CD14-positive monocyte (primary cell): ENCODE measurements at regions of chr19 and their contacts with region 1.

Region 1: GRCh38 chr19:40465557-40466150 is at the start of gene BLVRB:
- DNase-seq: peak; percentile 98 to 99 (median 98)
- H3K4me3 ChIP-seq: peak within 1 kb of the TSS; percentile 58 to 84 (median 62)
- H3K4me3 Mint-ChIP-seq: peak within 1 kb of the TSS; percentile 90 to 96
- H3K27ac ChIP-seq: peak within 1 kb of the TSS; percentile 91 to 96
- H3K27ac Mint-ChIP-seq: peak within 1 kb of the TSS; percentile 93 to 99 (median 97)
- H3K4me1 ChIP-seq: peaks cover 57 to 70% of the 10 kb centered on the region in 2 donors
- H3K4me1 Mint-ChIP-seq: peaks cover 61% of the 10 kb centered on the region
- H3K27me3 ChIP-seq: peaks cover 13 to 24% of the 10 kb centered on the region in 2 donors
- H3K27me3 Mint-ChIP-seq: peaks cover 25 to 33% (median 30%) of the 10 kb centered on the region in 3 donors
- CTCF ChIP-seq: no peak
- polyA plus RNA-seq, gene BLVRB: 299 to 625 (median 601) TPM

Region 2: GRCh38 chr19:40365613-40366401 is 99.8 kb before region 1 on chr19:
- intact Hi-C with region 1: loop called in 1 of 2 experiments (anchors 10 kb)
- DNase-seq: peak; percentile 69 to 84 (median 74)
- H3K4me3 ChIP-seq: peak overlapping the region; percentile 34 to 69 (median 41)
- H3K4me3 Mint-ChIP-seq: peak overlapping the region; percentile 76 to 81
- H3K27ac ChIP-seq: peak overlapping the region; percentile 69 to 72
- H3K27ac Mint-ChIP-seq: peak overlapping the region; percentile 77 to 94 (median 87)
- H3K4me1 ChIP-seq: peaks cover 66 to 70% of the 10 kb centered on the region in 2 donors
- H3K4me1 Mint-ChIP-seq: peaks cover 61% of the 10 kb centered on the region
- H3K27me3 ChIP-seq: no peaks in the 10 kb centered on the region
- H3K27me3 Mint-ChIP-seq: peaks cover 0 to 2% (median 0%) of the 10 kb centered on the region in 3 donors
- CTCF ChIP-seq: no peak

Region 3: DNA sequence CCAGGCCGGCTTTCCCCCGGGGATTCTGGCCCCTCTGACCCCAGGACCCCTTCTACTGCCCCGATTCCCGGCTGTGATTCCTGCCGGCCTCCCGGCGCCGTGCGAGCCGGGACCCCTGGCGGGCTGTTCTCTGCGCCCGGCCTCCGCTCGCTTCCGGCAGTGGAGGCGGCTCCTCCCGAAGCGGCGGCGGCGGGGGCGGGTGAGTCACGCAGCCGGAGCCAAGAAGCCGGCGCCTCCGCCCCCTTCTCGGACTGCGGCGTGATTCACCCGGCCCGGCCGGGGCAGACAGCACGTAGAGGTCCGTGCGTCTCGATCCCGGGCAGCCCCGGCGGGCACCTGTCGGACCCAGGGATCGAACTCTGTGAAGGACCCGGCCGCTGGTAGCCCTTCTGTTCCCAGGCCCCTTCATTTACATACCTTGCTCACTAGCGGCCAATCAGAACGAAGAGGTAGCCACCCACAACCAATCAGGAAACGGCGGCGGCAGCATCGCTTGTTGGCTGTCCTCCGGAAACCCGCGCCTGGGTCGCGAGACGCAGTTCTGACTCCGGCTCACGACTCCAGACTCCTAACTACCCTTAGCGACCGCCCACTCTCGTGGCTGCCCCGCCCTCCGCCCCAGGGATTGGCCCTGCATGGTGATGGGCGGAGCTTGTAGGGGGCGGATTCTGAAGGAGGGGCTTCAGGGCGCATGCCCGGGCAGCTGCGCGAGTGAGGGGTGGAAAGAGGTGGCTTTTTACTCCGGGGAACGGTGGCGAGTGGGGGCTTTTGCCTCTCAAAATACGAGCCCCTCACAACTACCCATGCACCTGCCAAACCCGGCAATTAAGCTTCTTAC is 40.0 kb before region 1 on chr19 and contains the start of gene SERTAD1:
- intact Hi-C with region 1: loop called in 1 of 2 experiments (anchors 2 kb)
- DNase-seq: peak; percentile 99
- H3K4me3 ChIP-seq: peak within 1 kb of the TSS; percentile 93 to 97 (median 94)
- H3K4me3 Mint-ChIP-seq: peak within 1 kb of the TSS; percentile 99
- H3K27ac ChIP-seq: peak within 1 kb of the TSS; percentile 97 to 99
- H3K27ac Mint-ChIP-seq: peak within 1 kb of the TSS; percentile 94 to 100 (median 98)
- H3K4me1 ChIP-seq: peaks cover 19 to 28% of the 10 kb centered on the region in 2 donors
- H3K4me1 Mint-ChIP-seq: peaks cover 21% of the 10 kb centered on the region
- H3K27me3 ChIP-seq: no peaks in the 10 kb centered on the region
- H3K27me3 Mint-ChIP-seq: peaks cover 0 to 3% (median 0%) of the 10 kb centered on the region in 3 donors
- CTCF ChIP-seq: peak; percentile 77
- polyA plus RNA-seq, gene SERTAD1: 21.0 to 55.9 (median 21.6) TPM

Region 4: DNA sequence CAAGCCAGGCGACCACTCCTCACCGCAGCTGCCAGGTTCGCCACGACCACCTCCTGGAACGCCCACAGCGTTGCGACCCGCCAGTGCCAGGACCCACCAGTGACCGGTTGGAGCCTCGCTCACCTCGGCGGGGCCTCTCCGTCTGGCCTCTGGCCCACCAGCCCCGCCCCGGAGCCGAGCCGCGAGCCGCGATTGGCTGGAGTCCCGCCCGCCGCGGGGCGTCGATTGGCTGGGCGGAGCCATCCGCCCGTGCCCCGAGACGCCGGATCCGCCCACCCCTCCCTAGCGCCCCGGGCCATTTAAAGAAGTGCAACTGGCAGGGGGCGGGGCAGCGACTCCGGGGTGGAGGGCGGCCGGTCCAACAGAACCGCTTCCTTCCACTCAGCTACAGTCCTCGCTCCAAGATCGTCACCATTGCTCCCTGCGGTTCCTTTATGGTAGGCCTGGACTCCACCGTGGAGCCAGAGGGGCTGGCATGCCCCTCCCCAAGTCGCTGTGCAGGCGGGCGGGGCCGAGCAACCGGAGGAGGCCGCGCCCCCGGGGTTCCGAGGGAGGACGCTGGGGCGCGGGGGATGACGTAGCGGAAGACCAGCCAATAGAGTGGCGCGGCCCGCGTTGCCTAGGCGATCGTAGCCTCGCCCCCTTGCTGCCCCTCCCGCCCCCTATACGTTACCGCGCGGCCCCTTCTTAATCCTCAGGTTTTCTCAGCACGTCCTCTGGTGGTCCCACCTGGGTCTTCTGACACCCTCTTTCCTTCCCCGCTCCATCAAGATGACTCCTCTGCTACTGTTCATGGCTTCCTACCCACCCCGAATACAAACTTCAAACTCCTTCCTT is 21.2 kb before region 1 on chr19 and contains the start of gene SERTAD3:
- intact Hi-C with region 1: loop called (anchors 2 kb)
- DNase-seq: peak; percentile 93 to 94 (median 93)
- H3K4me3 ChIP-seq: peak within 1 kb of the TSS; percentile 87 to 100 (median 100)
- H3K4me3 Mint-ChIP-seq: peak within 1 kb of the TSS; percentile 100
- H3K27ac ChIP-seq: peak within 1 kb of the TSS; percentile 95 to 97
- H3K27ac Mint-ChIP-seq: peak within 1 kb of the TSS; percentile 97 to 100 (median 98)
- H3K4me1 ChIP-seq: peaks cover 28 to 32% of the 10 kb centered on the region in 2 donors
- H3K4me1 Mint-ChIP-seq: peaks cover 27% of the 10 kb centered on the region
- H3K27me3 ChIP-seq: no peaks in the 10 kb centered on the region
- H3K27me3 Mint-ChIP-seq: peaks cover 0 to 1% (median 0%) of the 10 kb centered on the region in 3 donors
- CTCF ChIP-seq: no peak
- polyA plus RNA-seq, gene SERTAD3: 30.4 to 57.2 (median 49.4) TPM

Region 5: DNA sequence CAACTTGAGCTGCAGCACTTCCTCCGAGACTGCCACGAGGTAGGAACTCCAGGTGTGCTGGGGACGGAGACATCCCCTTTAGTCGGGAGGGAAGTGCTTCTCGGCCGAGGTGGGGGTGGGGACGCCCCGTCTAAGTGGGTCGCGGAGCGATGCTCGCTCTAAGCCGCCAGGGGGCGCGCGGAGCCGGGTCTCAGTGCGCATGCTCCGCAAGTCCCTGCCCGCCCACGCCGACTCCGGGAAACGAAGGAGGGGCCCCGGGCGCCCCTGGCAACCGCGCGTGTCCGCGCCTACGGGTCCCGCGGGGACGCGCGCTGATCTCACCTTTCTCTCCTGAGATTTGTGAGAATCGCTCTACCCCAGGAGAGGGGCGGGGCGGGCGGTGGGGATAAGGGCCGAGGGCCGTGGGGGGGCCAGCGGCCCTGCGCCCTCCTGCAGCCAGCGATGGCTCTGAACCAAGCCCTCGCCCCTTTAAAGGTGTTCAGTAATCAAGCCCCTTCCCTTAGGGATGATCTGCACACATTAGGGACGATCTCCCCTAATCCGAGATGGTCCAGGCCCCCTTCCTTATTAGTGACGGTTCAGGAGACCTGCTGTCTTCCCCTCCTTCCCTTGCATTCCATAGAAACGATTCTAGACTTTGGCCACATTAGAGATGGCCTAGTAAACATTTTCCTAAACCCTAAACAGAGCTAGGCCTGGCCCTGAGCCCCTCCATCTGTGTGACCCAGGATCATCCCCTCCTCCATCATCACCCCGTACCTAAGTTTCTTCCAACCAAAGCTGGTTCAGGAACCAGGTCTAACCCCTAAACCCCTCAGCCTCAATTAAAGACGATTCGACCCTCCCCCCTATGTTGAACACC is 63.7 kb after region 1 on chr19:
- intact Hi-C with region 1: loop called in 1 of 2 experiments (anchors 5 kb)
- DNase-seq: peak; percentile 69 to 83 (median 80)
- H3K4me3 ChIP-seq: peak overlapping the region; percentile 32 to 79 (median 43)
- H3K4me3 Mint-ChIP-seq: peak overlapping the region; percentile 71 to 89
- H3K27ac ChIP-seq: no peak overlapping the region
- H3K27ac Mint-ChIP-seq: peak overlapping the region in 2 of 7 donors; percentile 37 to 69
- H3K4me1 ChIP-seq: peaks cover 13 to 17% of the 10 kb centered on the region in 2 donors
- H3K4me1 Mint-ChIP-seq: peaks cover 18% of the 10 kb centered on the region
- H3K27me3 ChIP-seq: peaks cover 16 to 37% of the 10 kb centered on the region in 2 donors
- H3K27me3 Mint-ChIP-seq: peaks cover 36 to 54% (median 52%) of the 10 kb centered on the region in 3 donors
- CTCF ChIP-seq: peak; percentile 99

Region 6: DNA sequence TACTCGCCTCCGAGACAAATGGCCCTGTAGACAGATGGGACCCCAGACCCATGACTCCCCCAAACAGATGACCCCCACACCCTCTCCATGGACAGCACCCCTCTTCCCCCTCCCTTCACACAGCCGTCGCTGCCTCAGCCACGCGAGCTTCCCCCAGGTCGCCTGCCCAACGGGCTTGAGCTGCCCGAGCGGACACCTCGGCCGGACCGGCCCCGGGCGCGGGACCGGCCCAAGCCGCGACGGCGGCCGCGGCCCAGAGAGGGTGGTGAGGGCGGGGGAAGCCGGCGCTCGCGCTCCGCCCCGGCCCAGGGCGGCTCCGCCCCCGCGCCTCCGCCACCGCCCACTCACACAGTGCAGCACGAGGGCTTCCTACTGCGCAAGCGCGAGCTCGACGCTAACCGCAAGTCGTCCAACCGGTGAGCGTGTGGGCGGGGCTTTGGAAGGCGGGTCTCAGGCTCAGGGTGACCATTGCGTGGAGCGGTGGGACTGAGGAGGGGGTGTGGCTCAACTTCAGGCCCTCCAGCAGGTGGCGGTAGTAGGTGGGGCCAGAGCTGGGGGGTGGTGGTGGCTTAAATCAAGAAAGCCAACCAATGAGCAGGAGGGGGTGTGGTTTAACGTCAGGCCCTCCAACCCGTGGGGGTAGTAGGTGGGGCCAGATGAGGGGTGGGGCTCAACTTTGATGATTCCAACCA is 104.8 kb after region 1 on chr19:
- intact Hi-C with region 1: loop called in 1 of 2 experiments (anchors 5 kb)
- DNase-seq: peak; percentile 100
- H3K4me3 ChIP-seq: peak overlapping the region in 2 of 3 experiments; percentile 32 to 70
- H3K4me3 Mint-ChIP-seq: peak overlapping the region; percentile 76 to 87
- H3K27ac ChIP-seq: peak overlapping the region in 1 of 2 donors; percentile 25
- H3K27ac Mint-ChIP-seq: peak overlapping the region; percentile 77 to 93 (median 83)
- H3K4me1 ChIP-seq: peaks cover 17 to 28% of the 10 kb centered on the region in 2 donors
- H3K4me1 Mint-ChIP-seq: peaks cover 13% of the 10 kb centered on the region
- H3K27me3 ChIP-seq: peaks cover 19 to 45% of the 10 kb centered on the region in 2 donors
- H3K27me3 Mint-ChIP-seq: peaks cover 43 to 48% (median 45%) of the 10 kb centered on the region in 3 donors
- CTCF ChIP-seq: peak; percentile 27